ENCODE measurements at regions of chr2 and their contacts with region 1.

Region 1: GRCh38 chr2:158753641-158754611 is 41.2 kb upstream of the DAPL1 start:
- H3K4me3 ChIP-seq: no peak overlapping the region
- H3K27ac ChIP-seq: no peak overlapping the region
- H3K4me1 ChIP-seq: no peaks in the 10 kb centered on the region
- CTCF ChIP-seq: peak; percentile 83

Region 2: GRCh38 chr2:158013891-158014290 is 740.0 kb before region 1 on chr2:
- CTCF ChIA-PET with region 1: interaction called, 13 read pairs
- POLR2A ChIA-PET with region 1: no interaction called
- H3K4me3 ChIP-seq: no peak overlapping the region
- H3K27ac ChIP-seq: no peak overlapping the region
- H3K4me1 ChIP-seq: no peaks in the 10 kb centered on the region
- CTCF ChIP-seq: no peak

Region 3: DNA sequence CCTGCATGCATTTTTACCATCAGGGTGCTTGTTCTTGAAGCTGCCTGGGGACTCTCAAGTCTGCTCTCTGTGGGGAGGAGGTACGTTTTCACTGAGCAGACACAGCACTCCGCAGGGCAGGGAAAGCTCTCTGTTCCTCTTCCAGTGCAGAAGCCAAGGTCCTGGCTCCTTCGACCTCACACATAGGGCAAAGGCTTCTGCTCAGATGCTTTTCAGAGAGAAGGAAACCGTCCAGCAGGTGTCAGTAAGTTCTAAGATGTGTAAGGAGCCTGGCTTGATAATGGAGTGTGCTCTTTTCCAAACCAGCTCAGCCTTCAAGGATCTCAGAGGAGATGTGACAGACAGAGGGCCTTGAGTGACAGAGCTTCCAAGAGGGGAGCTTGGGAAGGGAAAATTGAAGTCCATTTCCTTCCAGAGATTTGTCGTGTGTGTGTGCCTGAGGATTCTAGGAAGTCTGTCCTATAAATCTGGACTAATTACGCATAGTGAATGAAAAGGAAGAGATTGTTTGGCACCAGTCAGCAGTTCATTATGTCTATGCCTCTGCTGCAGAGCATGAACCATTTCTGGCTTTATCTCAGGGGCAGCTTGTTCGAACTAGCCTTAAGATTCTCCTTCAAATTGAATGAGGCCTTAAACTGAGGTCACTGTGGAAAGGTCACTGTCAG is 719.6 kb before region 1 on chr2:
- CTCF ChIA-PET with region 1: interaction called, 89 read pairs
- POLR2A ChIA-PET with region 1: no interaction called
- H3K4me3 ChIP-seq: no peak overlapping the region
- H3K27ac ChIP-seq: no peak overlapping the region
- H3K4me1 ChIP-seq: no peaks in the 10 kb centered on the region
- CTCF ChIP-seq: peak; percentile 48; the same call in 1 of the 2 replicates

Region 4: DNA sequence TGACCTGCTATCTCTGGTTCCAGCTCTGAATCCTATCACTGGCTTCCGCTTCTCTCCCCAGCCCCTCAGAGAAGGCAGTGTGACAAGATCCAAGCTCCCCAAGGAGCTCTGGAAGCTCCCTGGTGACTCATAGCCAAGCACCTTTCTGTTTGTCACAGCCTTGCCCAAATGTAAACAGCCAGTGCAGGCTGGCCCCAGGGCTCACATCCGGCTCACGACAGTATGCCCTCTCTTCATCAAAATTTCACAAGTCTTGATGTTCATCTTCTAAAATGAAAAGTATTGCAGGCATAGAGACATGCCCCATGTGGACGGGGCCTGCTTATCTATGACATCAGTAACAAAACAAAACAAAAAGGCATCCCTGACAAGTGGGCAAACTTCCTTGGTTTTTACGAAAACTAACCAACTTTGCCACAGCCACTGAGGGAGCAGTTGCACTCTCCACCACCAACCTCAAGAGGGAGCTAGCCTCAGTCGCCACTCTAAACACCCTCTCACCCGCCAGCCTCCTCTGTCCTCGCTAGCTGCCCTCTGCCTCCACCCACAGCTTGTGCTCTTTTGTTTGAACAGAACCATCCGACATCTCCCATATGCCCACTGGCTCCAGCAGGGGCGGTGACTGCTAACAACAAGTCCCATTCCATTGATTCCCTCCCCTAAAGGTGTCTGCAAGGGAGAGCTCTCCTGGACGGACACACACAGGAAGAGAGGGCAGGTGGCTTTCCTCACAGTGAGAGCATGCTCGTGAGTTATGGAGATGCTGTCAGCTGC is 29.8 kb before region 1 on chr2:
- CTCF ChIA-PET with region 1: interaction called, 19 read pairs
- POLR2A ChIA-PET with region 1: no interaction called
- H3K4me3 ChIP-seq: no peak overlapping the region
- H3K27ac ChIP-seq: no peak overlapping the region
- H3K4me1 ChIP-seq: no peaks in the 10 kb centered on the region
- CTCF ChIP-seq: peak; percentile 49; the same call in 1 of the 2 replicates